Astrocyte of the cerebellum (primary cell): ENCODE measurements at regions of chr3 and their contacts with region 1.

Region 1: GRCh38 chr3:24237971-24238767 is 256.5 kb downstream of the THRB start:
- DNase-seq: peak; percentile 79
- H3K4me3 ChIP-seq: no peak overlapping the region
- CTCF ChIP-seq: peak; percentile 82

Region 2: GRCh38 chr3:23999012-23999641 is 239.0 kb before region 1 on chr3:
- in situ Hi-C with region 1: loop called (anchors 10 kb)
- DNase-seq: peak; percentile 35
- H3K4me3 ChIP-seq: no peak overlapping the region
- CTCF ChIP-seq: peak; percentile 93